A673 (cell line): ENCODE measurements at regions of chr10 and their contacts with region 1.

Region 1: GRCh38 chr10:49606981-49607535 is 3.1 kb upstream of the SLC18A3 start:
- DNase-seq: peak; percentile 91
- H3K4me3 ChIP-seq: no peak overlapping the region
- H3K27ac ChIP-seq: no peak overlapping the region
- H3K4me1 ChIP-seq: peaks cover 11% of the 10 kb centered on the region
- H3K27me3 ChIP-seq: peaks cover 55% of the 10 kb centered on the region
- CTCF ChIP-seq: no peak

Region 2: GRCh38 chr10:49187950-49188761 is 418.9 kb before region 1 on chr10 and contains the start of gene TMEM273:
- CTCF ChIA-PET with region 1: no interaction called
- POLR2A ChIA-PET with region 1: no interaction called
- intact Hi-C with region 1: no loop called
- DNase-seq: no peak
- H3K4me3 ChIP-seq: no peak within 1 kb of the TSS
- H3K27ac ChIP-seq: no peak within 1 kb of the TSS
- H3K4me1 ChIP-seq: no peaks in the 10 kb centered on the region
- H3K27me3 ChIP-seq: peaks cover 38% of the 10 kb centered on the region
- CTCF ChIP-seq: no peak
- total RNA-seq, gene TMEM273: not detected in 2 replicates

Region 3: GRCh38 chr10:49761789-49762565 is 154.9 kb after region 1 on chr10 and contains the start of gene OGDHL:
- CTCF ChIA-PET with region 1: no interaction called
- POLR2A ChIA-PET with region 1: no interaction called
- intact Hi-C with region 1: loop called (anchors 2 kb)
- DNase-seq: peak; percentile 77
- H3K4me3 ChIP-seq: peak within 1 kb of the TSS; percentile 74
- H3K27ac ChIP-seq: no peak within 1 kb of the TSS
- H3K4me1 ChIP-seq: no peaks in the 10 kb centered on the region
- H3K27me3 ChIP-seq: peaks cover 13% of the 10 kb centered on the region
- CTCF ChIP-seq: no peak
- total RNA-seq, gene OGDHL: 1.6 and 2.6 TPM in 2 replicates